ENCODE measurements at regions of chr14 and their contacts with region 1.

Region 1: GRCh38 chr14:69863083-69863482 is 16.1 kb upstream of the SMOC1 start:
- DNase-seq: no peak
- H3K27ac ChIP-seq: no peak overlapping the region
- CTCF ChIP-seq: no peak

Region 2: GRCh38 chr14:69818757-69819191 is 44.3 kb before region 1 on chr14:
- CTCF ChIA-PET with region 1: no interaction called
- POLR2A ChIA-PET with region 1: no interaction called
- DNase-seq: peak; percentile 68
- H3K27ac ChIP-seq: no peak overlapping the region
- CTCF ChIP-seq: peak; percentile 81

Region 3: DNA sequence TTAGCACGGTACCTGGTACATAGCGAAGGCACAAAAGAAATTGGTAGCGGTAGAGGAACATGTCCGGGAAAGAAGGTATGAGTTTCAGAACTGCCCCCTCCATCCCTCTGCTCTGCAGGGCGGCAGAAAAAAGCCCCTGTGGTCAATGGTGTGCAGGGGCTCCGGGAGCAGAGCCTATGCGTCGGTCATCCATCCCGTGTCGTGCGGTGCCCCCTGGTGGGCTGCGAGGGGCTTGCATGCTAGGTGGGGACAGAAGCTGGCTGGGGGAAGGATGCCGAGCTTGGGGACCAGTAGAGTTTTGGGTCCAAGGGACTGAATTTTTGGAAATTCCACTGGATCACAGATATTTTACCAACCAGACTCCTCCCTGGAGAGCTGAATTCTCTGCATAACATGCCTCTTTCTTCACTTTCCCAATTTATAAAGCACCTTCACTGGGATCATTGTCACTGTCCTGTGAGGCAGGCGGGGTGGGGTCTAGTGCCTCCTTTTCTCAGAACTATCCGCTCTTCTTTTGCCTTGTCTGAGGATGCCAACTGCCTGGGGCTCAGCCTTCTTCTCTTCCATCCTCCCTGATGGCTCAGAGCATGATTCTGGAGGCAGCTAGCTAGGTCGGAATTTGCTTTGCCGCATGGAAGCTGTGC is 164.8 kb after region 1 on chr14:
- CTCF ChIA-PET with region 1: interaction called, 10 read pairs
- POLR2A ChIA-PET with region 1: no interaction called
- DNase-seq: peak; percentile 73
- H3K27ac ChIP-seq: no peak overlapping the region
- CTCF ChIP-seq: peak; percentile 85